ENCODE measurements at regions of chr6 and their contacts with region 1.

Region 1: DNA sequence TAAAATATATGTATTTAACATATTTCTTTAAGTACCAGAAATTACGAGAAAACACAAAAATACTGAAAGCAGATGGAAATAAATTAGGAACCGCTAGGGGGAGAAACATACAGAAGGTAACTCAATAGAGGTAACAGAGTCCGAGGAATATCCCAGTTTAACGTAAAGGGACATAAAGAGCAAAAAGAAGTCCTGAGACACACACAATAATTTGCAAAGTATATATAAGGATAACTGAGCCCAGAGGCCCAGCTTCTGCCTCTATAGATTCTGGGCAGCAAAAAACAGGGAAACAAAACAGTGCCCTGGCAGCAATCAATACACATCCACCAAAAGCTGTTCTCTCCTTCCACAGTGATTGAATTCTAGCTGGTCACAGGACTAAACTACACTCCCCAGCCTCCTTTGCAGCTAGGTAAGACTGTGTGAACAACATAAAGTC is 15.1 kb downstream of the TBC1D32 start:
- DNase-seq: no peak
- H3K4me3 ChIP-seq: no peak overlapping the region
- H3K27ac ChIP-seq: no peak overlapping the region
- H3K4me1 ChIP-seq: no peaks in the 10 kb centered on the region
- H3K27me3 ChIP-seq: no peaks in the 10 kb centered on the region
- CTCF ChIP-seq: peak; percentile 38 to 45

Region 2: GRCh38 chr6:120826253-120826652 is 492.9 kb before region 1 on chr6:
- CTCF ChIA-PET with region 1: no interaction called
- dilution Hi-C with region 1: no loop called
- in situ Hi-C with region 1: no loop called
- intact Hi-C with region 1: no loop called
- DNase-seq: peak; percentile 9
- H3K4me3 ChIP-seq: no peak overlapping the region
- H3K27ac ChIP-seq: no peak overlapping the region
- H3K4me1 ChIP-seq: no peaks in the 10 kb centered on the region
- H3K27me3 ChIP-seq: no peaks in the 10 kb centered on the region
- CTCF ChIP-seq: peak; percentile 77 to 84

Region 3: DNA sequence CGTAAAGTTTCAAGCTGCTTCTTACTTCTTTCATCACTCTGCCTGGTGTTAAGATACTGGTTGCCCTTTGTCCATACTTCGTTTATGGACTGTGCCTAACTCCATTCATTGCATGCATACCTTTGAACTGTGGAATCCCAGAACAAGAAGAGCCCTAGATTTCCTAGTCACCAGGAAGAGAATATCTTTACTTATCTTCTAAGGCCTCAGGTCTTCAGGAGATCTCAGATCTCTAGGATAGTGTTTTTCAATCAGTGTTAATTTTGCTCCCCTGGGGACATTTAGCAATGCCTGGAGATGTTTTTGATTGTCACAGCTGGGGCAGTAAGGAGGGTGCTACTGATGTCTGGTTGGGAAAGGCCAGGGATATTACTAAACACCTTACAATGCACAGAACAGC is 80.8 kb after region 1 on chr6:
- CTCF ChIA-PET with region 1: no interaction called
- dilution Hi-C with region 1: no loop called
- in situ Hi-C with region 1: no loop called
- intact Hi-C with region 1: loop called (anchors 1 kb)
- DNase-seq: no peak
- H3K4me3 ChIP-seq: no peak overlapping the region
- H3K27ac ChIP-seq: no peak overlapping the region
- H3K4me1 ChIP-seq: no peaks in the 10 kb centered on the region
- H3K27me3 ChIP-seq: peaks cover 3% of the 10 kb centered on the region
- CTCF ChIP-seq: no peak

Measured in mammary epithelial cell (primary cell).